Endothelial cell of umbilical vein (primary cell): ENCODE measurements at regions of chr3 and their contacts with region 1.

Region 1: DNA sequence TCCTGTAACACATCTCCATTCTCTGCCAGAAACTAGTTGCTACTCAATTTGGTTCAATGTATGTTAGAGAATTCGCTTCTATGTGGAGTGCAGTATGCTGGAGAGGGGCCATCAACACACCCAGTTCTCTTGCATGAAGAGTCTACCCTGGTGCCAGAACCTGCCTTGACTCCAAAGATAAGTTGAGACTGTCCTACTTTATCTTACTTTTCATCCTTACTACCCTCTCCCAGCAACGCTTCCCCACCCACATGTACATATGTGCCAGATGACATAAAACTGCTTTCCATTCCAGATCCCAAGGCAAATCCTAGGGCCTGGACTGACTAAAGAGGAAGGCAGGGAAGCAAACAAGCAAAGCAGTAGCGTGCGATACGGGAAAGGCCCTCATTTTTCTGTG is 442.6 kb upstream of the THRB start:
- DNase-seq: peak; percentile 26
- H3K4me3 ChIP-seq: no peak overlapping the region
- H3K27ac ChIP-seq: no peak overlapping the region
- H3K4me1 ChIP-seq: no peaks in the 10 kb centered on the region
- H3K27me3 ChIP-seq: no peaks in the 10 kb centered on the region
- CTCF ChIP-seq: no peak
- POLR2A ChIP-seq: no peak

Region 2: GRCh38 chr3:23913873-23914743 is 1023.1 kb before region 1 on chr3:
- CTCF ChIA-PET with region 1: no interaction called
- POLR2A ChIA-PET with region 1: no interaction called
- dilution Hi-C with region 1: no loop called
- intact Hi-C with region 1: no loop called
- DNase-seq: no peak
- H3K4me3 ChIP-seq: no peak overlapping the region
- H3K27ac ChIP-seq: no peak overlapping the region
- H3K4me1 ChIP-seq: peaks cover 15% of the 10 kb centered on the region
- H3K27me3 ChIP-seq: no peaks in the 10 kb centered on the region
- CTCF ChIP-seq: no peak
- POLR2A ChIP-seq: no peak

Region 3: GRCh38 chr3:24493746-24494617 is 443.2 kb before region 1 on chr3:
- CTCF ChIA-PET with region 1: no interaction called
- POLR2A ChIA-PET with region 1: no interaction called
- dilution Hi-C with region 1: no loop called
- intact Hi-C with region 1: no loop called
- DNase-seq: peak; percentile 20
- H3K4me3 ChIP-seq: peak overlapping the region; percentile 37 to 67 (median 56)
- H3K27ac ChIP-seq: no peak overlapping the region
- H3K4me1 ChIP-seq: peaks cover 12% of the 10 kb centered on the region
- H3K27me3 ChIP-seq: peaks cover 25 to 32% of the 10 kb centered on the region in 2 experiments
- CTCF ChIP-seq: no peak
- POLR2A ChIP-seq: no peak

Region 4: GRCh38 chr3:24802614-24803013 is 134.6 kb before region 1 on chr3:
- CTCF ChIA-PET with region 1: no interaction called
- POLR2A ChIA-PET with region 1: no interaction called
- dilution Hi-C with region 1: no loop called
- intact Hi-C with region 1: no loop called
- DNase-seq: no peak
- H3K4me3 ChIP-seq: no peak overlapping the region
- H3K27ac ChIP-seq: no peak overlapping the region
- H3K4me1 ChIP-seq: no peaks in the 10 kb centered on the region
- H3K27me3 ChIP-seq: no peaks in the 10 kb centered on the region
- CTCF ChIP-seq: no peak
- POLR2A ChIP-seq: no peak

Region 5: DNA sequence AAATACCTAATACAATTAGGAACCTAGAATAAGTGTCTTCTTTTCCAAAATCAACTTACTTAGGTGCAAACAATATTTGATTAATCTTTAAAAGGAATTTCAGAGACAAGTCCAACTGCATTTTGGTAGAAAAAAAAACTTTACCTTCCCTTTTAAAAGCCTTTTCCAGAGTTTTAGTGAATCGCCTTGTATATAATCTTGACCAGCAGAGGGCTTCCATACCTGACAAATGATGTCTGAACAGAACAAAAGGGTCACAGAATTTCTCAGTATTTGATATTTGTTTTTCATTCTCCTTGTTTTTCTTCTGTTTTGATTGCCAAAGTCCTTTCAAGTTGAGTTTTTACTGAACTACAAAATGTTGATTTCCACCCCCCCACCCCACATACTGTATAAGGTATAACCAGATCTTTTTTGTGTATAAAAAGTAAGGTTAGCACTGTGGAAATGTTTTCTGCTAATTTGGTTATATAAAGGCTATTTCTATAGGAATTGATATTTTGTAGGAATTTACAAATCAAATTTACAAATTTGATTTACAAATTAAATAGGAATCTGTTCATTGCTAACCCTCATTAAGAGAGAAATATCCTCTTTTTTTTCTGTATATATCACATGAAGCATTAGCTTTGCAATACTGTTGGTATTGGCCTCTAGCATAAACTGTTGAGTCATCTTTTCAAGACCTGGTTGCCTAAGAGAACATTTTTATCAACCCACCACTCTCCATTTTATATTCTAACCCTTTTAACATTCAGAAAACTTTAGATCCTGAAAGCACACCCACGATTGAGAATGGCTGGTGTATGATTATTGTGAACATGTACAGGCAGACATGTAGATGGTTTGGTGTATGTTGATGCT is 26.8 kb after region 1 on chr3:
- CTCF ChIA-PET with region 1: no interaction called
- POLR2A ChIA-PET with region 1: no interaction called
- dilution Hi-C with region 1: no loop called
- intact Hi-C with region 1: loop called (anchors 1 kb)
- DNase-seq: peak; percentile 40
- H3K4me3 ChIP-seq: no peak overlapping the region
- H3K27ac ChIP-seq: no peak overlapping the region
- H3K4me1 ChIP-seq: no peaks in the 10 kb centered on the region
- H3K27me3 ChIP-seq: no peaks in the 10 kb centered on the region
- CTCF ChIP-seq: peak; percentile 19 to 38
- POLR2A ChIP-seq: no peak

Region 6: GRCh38 chr3:25872200-25872877 is 935.1 kb after region 1 on chr3:
- CTCF ChIA-PET with region 1: no interaction called
- POLR2A ChIA-PET with region 1: no interaction called
- dilution Hi-C with region 1: no loop called
- intact Hi-C with region 1: no loop called
- DNase-seq: no peak
- H3K4me3 ChIP-seq: no peak overlapping the region
- H3K27ac ChIP-seq: no peak overlapping the region
- H3K4me1 ChIP-seq: no peaks in the 10 kb centered on the region
- H3K27me3 ChIP-seq: no peaks in the 10 kb centered on the region
- CTCF ChIP-seq: no peak
- POLR2A ChIP-seq: no peak